ENCODE measurements at regions of chr17 and their contacts with region 1.

Region 1: DNA sequence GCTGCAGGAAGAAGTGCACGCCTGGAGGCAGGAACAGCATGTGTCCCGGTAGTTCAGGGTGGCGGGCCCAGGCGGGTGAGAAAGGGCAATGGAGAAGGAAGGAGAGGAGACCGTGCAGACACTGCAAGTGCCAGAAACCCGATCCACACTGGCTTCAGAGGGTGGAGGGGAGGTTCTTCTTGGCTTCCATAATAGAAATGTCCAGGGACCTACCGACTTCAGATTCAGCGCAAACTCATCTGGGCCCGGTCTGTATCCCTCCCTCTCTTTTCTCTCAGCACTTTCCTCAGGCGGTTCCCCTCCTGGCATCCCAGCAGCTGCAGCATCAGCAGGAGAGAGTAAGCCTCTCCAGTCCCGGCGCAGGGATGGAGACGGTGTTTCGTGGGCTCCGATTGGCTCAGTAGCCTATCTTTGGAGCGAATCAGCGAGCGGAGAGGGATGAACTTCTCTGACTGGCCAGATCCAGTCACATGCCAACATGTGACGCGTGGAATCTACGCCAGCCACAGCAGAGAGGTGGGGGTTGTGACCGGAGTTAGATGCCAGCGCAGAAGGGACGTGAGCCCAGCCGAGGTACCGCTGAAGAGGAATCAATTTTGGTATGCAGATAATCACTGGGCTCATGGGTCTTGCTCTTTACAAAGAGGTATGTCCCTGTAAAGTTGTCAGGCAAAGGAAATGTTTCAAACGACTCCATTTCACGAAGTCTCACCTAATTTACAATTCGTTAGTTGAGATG is 1.9 kb upstream of the PRPSAP2 start:
- DNase-seq: peak; percentile 94
- H3K4me3 Mint-ChIP-seq: peak overlapping the region; percentile 93
- H3K27ac Mint-ChIP-seq: peak overlapping the region; percentile 79
- H3K4me1 Mint-ChIP-seq: peaks cover 36% of the 10 kb centered on the region
- H3K27me3 Mint-ChIP-seq: no peaks in the 10 kb centered on the region

Region 2: DNA sequence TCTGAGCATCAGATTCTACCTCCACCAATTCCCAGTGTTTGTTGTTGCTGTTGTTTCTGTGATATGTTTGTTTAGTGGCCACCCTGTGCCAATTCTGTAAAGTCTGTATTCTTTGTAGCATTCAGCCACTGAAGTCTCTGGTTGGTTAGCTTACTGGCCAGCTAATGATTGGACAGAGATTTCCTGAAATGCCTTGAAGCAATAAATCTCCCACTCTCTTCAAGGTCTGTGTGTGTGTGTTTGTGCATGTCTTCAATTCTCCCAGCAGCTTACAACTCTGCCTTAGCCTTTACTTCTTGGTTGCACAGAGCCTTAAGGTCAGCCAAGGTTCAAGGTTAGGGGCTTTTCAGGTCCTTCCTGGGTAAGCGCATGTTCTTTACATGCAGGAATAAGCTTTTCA is 40.1 kb after region 1 on chr17:
- CTCF ChIA-PET with region 1: no interaction called
- POLR2A ChIA-PET with region 1: interaction called, 5 read pairs
- intact Hi-C with region 1: loop called (anchors 2 kb)
- DNase-seq: no peak
- H3K4me3 Mint-ChIP-seq: no peak overlapping the region
- H3K27ac Mint-ChIP-seq: no peak overlapping the region
- H3K4me1 Mint-ChIP-seq: peaks cover 11% of the 10 kb centered on the region
- H3K27me3 Mint-ChIP-seq: no peaks in the 10 kb centered on the region

Region 3: DNA sequence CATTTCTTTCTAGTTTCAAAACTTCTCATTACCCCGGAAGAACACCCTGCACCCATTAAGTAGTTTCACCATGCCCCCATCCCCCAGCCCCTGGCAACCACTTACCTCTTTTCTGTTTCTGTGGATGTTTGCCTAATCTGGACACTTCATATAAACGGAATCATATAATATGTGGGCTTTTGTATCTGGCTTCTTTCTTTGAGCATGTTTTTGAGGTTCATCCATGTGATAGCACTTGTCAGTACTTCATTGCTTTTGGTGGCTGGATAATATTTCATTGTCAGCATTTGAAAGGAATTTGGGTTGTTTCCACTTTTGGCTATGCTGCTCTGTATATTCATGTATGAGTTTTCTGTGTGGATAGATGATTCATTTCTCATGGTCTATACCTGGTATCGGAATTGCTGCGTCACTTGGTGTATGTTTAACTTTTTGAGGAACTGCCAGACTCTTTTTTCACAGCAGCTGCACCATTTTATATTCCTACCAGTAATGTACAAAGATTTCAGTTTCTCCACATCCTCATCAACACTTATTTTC is 66.0 kb after region 1 on chr17:
- CTCF ChIA-PET with region 1: interaction called, 3 read pairs
- POLR2A ChIA-PET with region 1: no interaction called
- intact Hi-C with region 1: loop called (anchors 1 kb)
- DNase-seq: peak; percentile 37
- H3K4me3 Mint-ChIP-seq: peak overlapping the region; percentile 8
- H3K27ac Mint-ChIP-seq: peak overlapping the region; percentile 67
- H3K4me1 Mint-ChIP-seq: peaks cover 53% of the 10 kb centered on the region
- H3K27me3 Mint-ChIP-seq: no peaks in the 10 kb centered on the region

Region 4: GRCh38 chr17:18951941-18952842 is 96.2 kb after region 1 on chr17 and contains the start of gene SLC5A10:
- CTCF ChIA-PET with region 1: no interaction called
- POLR2A ChIA-PET with region 1: no interaction called
- intact Hi-C with region 1: no loop called
- DNase-seq: no peak
- H3K4me3 Mint-ChIP-seq: no peak within 1 kb of the TSS
- H3K27ac Mint-ChIP-seq: no peak within 1 kb of the TSS
- H3K4me1 Mint-ChIP-seq: peaks cover 20% of the 10 kb centered on the region
- H3K27me3 Mint-ChIP-seq: no peaks in the 10 kb centered on the region
- total RNA-seq, gene SLC5A10: not detected

Region 5: GRCh38 chr17:19004421-19005136 is 148.6 kb after region 1 on chr17 and contains the start of gene FAM83G:
- CTCF ChIA-PET with region 1: no interaction called
- POLR2A ChIA-PET with region 1: interaction called, 3 read pairs
- intact Hi-C with region 1: loop called (anchors 10 kb)
- DNase-seq: peak; percentile 94
- H3K4me3 Mint-ChIP-seq: peak within 1 kb of the TSS; percentile 90
- H3K27ac Mint-ChIP-seq: peak within 1 kb of the TSS; percentile 90
- H3K4me1 Mint-ChIP-seq: peaks cover 33% of the 10 kb centered on the region
- H3K27me3 Mint-ChIP-seq: no peaks in the 10 kb centered on the region
- total RNA-seq, gene FAM83G: 12.6 to 14.3 TPM

Measured in activated CD4-positive, alpha-beta memory T cell treated with anti-CD3 and anti-CD28 coated beads for 36 hours (primary cell).